A673 (cell line): ENCODE measurements at regions of chr6 and their contacts with region 1.

Region 1: DNA sequence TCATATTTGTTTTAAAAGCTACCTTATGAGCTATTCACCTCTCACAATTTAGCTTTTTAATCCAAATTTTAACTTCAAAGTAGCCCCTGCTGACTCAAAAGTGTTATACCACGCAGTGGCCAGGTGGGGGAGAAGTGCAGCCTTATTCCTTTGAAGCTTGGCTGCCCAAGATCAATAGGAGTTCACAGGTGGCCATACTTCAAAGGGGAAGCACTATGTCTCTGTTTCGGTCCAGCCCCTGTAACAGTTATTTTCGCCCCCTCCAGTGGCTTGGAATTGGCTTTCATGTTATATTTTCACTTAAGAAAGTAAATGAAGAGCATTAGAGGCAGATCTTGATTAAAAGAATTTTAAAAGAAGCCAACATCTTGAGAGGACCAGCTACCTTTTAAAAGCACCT is 608.4 kb downstream of the EPHA7 start:
- DNase-seq: peak; percentile 60
- H3K4me3 ChIP-seq: no peak overlapping the region
- H3K27ac ChIP-seq: no peak overlapping the region
- H3K4me1 ChIP-seq: no peaks in the 10 kb centered on the region
- H3K27me3 ChIP-seq: no peaks in the 10 kb centered on the region
- CTCF ChIP-seq: peak; percentile 72

Region 2: GRCh38 chr6:93017213-93017612 is 206.3 kb after region 1 on chr6:
- CTCF ChIA-PET with region 1: interaction called, 5 read pairs
- POLR2A ChIA-PET with region 1: no interaction called
- intact Hi-C with region 1: loop called (anchors 5 kb)
- DNase-seq: peak; percentile 49
- H3K4me3 ChIP-seq: no peak overlapping the region
- H3K27ac ChIP-seq: no peak overlapping the region
- H3K4me1 ChIP-seq: no peaks in the 10 kb centered on the region
- H3K27me3 ChIP-seq: no peaks in the 10 kb centered on the region
- CTCF ChIP-seq: peak; percentile 36; the same call in 1 of the 2 replicates

Region 3: GRCh38 chr6:93079061-93079460 is 268.1 kb after region 1 on chr6:
- CTCF ChIA-PET with region 1: no interaction called
- POLR2A ChIA-PET with region 1: no interaction called
- intact Hi-C with region 1: no loop called
- DNase-seq: no peak
- H3K4me3 ChIP-seq: no peak overlapping the region
- H3K27ac ChIP-seq: no peak overlapping the region
- H3K4me1 ChIP-seq: peaks cover 12% of the 10 kb centered on the region
- H3K27me3 ChIP-seq: no peaks in the 10 kb centered on the region
- CTCF ChIP-seq: no peak